ENCODE measurements at regions of chr11 and their contacts with region 1.

Region 1: GRCh38 chr11:119338318-119338907 is 2.3 kb downstream of the C1QTNF5 start:
- DNase-seq: no peak
- ATAC-seq: peak; percentile 57
- H3K4me3 ChIP-seq: peak overlapping the region; percentile 2; the same call in 1 of the 2 replicates
- H3K27ac ChIP-seq: peak overlapping the region; percentile 96
- H3K4me1 ChIP-seq: peaks cover 26% of the 10 kb centered on the region
- H3K27me3 ChIP-seq: no peaks in the 10 kb centered on the region
- CTCF ChIP-seq: peak; percentile 95
- POLR2A ChIP-seq: no peak
- RAD21 ChIP-seq: peak; percentile 82

Region 2: DNA sequence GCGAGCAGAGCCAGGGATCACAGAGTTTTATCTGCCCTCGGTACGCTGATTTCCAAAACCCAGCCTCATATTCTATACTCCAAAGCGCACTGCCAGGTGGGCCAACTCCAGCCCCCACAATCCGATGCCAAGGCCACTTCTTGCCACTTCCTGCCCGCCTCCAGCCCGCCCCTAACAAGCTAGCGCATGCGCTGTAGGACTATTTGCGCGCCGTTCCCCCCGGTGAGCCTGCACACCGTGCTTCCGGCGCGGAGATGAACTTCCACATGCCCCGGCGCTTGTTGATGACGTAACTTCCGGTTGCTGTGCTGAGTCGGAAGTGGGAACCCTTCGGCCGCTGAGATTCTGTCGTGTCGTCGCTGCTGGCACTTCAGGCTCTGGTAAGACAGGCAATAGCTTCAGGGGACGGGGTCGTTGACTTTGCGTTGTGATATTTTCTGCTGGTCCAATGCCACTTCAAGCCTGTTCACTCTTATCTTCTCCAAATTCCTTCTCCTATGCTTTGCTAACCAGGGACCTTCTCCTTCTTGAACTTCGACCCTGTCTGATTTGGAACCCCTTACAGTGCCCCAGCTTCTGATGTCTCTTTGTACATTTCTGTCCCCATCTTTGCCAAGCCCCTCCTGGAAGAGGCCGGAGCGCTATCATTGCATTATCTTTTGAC is 979.0 kb before region 1 on chr11 and contains the start of gene UBE4A:
- CTCF ChIA-PET with region 1: no interaction called
- POLR2A ChIA-PET with region 1: no interaction called
- dilution Hi-C with region 1: no loop called
- in situ Hi-C with region 1: no loop called
- intact Hi-C with region 1: no loop called
- DNase-seq: peak; percentile 93
- ATAC-seq: peak; percentile 88
- H3K4me3 ChIP-seq: peak within 1 kb of the TSS; percentile 78
- H3K27ac ChIP-seq: peak within 1 kb of the TSS; percentile 75
- H3K4me1 ChIP-seq: peaks cover 2% of the 10 kb centered on the region; the same call in 1 of the 2 replicates
- H3K27me3 ChIP-seq: no peaks in the 10 kb centered on the region
- CTCF ChIP-seq: no peak
- POLR2A ChIP-seq: peak; percentile 80
- RAD21 ChIP-seq: no peak
- total RNA-seq, gene UBE4A: 69.7 and 71.1 TPM in 2 replicates

Region 3: DNA sequence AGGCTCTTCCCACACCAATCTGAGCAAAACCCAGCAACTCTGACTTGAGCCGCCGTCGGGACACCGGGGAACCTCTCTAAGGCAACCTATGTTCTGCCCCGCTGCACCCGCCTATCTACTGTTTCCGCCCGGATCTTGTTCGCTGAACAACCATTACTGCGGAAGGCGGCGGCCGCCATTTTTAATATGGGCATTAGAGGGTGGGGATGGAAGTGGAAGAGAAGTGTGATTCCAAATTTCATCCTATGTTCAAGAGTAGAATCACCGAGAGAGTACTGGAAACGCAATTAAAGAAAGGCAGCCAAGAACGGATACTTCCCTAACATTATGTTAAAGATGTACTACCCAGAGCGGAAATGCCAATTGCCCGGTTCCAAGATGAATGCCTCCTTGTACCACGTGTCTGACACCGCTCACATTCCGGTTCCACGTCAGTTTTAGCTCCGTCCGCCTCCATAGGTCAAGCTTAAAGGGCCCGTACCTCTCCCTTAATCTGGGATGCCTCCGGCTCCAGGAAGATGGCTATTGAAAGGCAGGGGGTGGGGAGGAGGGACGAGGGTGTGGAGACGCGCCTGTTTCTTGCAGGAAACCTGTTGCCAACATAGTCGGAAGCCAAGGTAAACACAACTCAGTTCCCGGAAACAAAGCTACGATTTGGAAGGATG is 236.5 kb before region 1 on chr11 and contains the start of gene DPAGT1:
- CTCF ChIA-PET with region 1: interaction called, 9 read pairs
- POLR2A ChIA-PET with region 1: interaction called, 6 read pairs
- dilution Hi-C with region 1: no loop called
- in situ Hi-C with region 1: no loop called
- intact Hi-C with region 1: loop called (anchors 1 kb)
- DNase-seq: peak; percentile 97
- ATAC-seq: peak; percentile 86
- H3K4me3 ChIP-seq: peak within 1 kb of the TSS; percentile 72
- H3K27ac ChIP-seq: peak within 1 kb of the TSS; percentile 80
- H3K4me1 ChIP-seq: peaks cover 8% of the 10 kb centered on the region
- H3K27me3 ChIP-seq: no peaks in the 10 kb centered on the region
- CTCF ChIP-seq: no peak
- POLR2A ChIP-seq: peak; percentile 41; the same call in 1 of the 2 replicates
- RAD21 ChIP-seq: no peak
- total RNA-seq, gene DPAGT1: 13.6 and 15.2 TPM in 2 replicates

Region 4: DNA sequence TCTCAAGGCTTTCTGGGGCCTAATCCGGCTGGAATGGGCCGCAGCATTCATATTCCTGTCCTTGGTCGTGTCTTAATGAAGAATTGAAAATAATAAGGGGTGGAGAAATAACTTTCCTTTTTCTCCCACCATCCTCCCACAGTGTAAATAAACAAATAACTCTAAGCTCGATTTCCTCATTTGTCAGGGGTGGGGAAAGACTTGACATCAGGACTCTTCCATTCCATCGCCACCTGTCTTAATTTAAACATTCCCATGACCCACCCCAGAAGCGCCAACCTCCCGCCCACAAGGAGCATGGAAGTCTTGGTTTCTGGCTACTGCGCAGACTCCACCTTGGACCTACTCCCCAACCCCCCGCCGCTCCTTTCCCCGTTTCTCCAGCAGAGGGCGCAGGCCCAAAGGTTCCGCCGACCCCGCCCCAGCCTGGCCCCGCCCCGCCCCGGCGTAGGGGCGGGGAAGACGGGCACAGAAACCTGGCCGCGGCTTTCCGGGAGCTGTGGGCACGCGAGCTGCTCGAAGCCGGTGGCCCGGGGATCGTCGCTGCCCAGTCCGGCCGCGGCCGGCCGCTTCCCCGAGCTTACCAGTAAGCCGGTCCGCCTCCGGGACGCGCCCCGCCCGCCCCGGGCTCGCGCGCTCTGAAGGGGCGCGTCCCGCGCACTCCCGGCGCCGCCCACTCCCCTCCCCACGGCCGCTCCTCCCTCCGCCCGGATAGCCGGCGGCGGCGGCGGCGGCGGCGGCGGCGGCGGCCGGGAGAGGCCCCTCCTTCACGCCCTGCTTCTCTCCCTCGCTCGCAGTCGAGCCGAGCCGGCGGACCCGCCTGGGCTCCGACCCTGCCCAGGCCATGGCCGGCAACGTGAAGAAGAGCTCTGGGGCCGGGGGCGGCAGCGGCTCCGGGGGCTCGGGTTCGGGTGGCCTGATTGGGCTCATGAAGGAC is 132.6 kb before region 1 on chr11 and contains the start of gene CBL:
- CTCF ChIA-PET with region 1: interaction called, 3 read pairs
- POLR2A ChIA-PET with region 1: interaction called, 4 read pairs
- dilution Hi-C with region 1: no loop called
- in situ Hi-C with region 1: no loop called
- intact Hi-C with region 1: loop called (anchors 1 kb)
- DNase-seq: peak; percentile 84
- ATAC-seq: peak; percentile 93
- H3K4me3 ChIP-seq: peak within 1 kb of the TSS; percentile 100
- H3K27ac ChIP-seq: peak within 1 kb of the TSS; percentile 99
- H3K4me1 ChIP-seq: peaks cover 5% of the 10 kb centered on the region
- H3K27me3 ChIP-seq: no peaks in the 10 kb centered on the region
- CTCF ChIP-seq: peak; percentile 86
- POLR2A ChIP-seq: peak; percentile 59; the same call in 1 of the 2 replicates
- RAD21 ChIP-seq: peak; percentile 51
- total RNA-seq, gene CBL: 6.1 and 7.2 TPM in 2 replicates

Region 5: GRCh38 chr11:119356349-119357031 is 18.1 kb after region 1 on chr11:
- CTCF ChIA-PET with region 1: interaction called, 20 read pairs
- POLR2A ChIA-PET with region 1: interaction called, 6 read pairs
- dilution Hi-C with region 1: no loop called
- in situ Hi-C with region 1: no loop called
- intact Hi-C with region 1: loop called (anchors 1 kb)
- DNase-seq: peak; percentile 66
- ATAC-seq: peak; percentile 87
- H3K4me3 ChIP-seq: peak overlapping the region; percentile 46
- H3K27ac ChIP-seq: no peak overlapping the region
- H3K4me1 ChIP-seq: peaks cover 3% of the 10 kb centered on the region
- H3K27me3 ChIP-seq: 0 out of 2 replicates have a peak, but pooled peaks cover 4% of the 10 kb centered on the region
- CTCF ChIP-seq: peak; percentile 90
- POLR2A ChIP-seq: no peak
- RAD21 ChIP-seq: peak; percentile 79

Region 6: GRCh38 chr11:119373921-119374631 is 35.7 kb after region 1 on chr11:
- CTCF ChIA-PET with region 1: interaction called, 7 read pairs
- POLR2A ChIA-PET with region 1: no interaction called
- dilution Hi-C with region 1: no loop called
- in situ Hi-C with region 1: no loop called
- intact Hi-C with region 1: loop called (anchors 1 kb)
- DNase-seq: peak; percentile 75
- ATAC-seq: peak; percentile 81
- H3K4me3 ChIP-seq: no peak overlapping the region
- H3K27ac ChIP-seq: no peak overlapping the region
- H3K4me1 ChIP-seq: peaks cover 24% of the 10 kb centered on the region
- H3K27me3 ChIP-seq: no peaks in the 10 kb centered on the region
- CTCF ChIP-seq: peak; percentile 97
- POLR2A ChIP-seq: no peak
- RAD21 ChIP-seq: peak; percentile 93

Region 7: DNA sequence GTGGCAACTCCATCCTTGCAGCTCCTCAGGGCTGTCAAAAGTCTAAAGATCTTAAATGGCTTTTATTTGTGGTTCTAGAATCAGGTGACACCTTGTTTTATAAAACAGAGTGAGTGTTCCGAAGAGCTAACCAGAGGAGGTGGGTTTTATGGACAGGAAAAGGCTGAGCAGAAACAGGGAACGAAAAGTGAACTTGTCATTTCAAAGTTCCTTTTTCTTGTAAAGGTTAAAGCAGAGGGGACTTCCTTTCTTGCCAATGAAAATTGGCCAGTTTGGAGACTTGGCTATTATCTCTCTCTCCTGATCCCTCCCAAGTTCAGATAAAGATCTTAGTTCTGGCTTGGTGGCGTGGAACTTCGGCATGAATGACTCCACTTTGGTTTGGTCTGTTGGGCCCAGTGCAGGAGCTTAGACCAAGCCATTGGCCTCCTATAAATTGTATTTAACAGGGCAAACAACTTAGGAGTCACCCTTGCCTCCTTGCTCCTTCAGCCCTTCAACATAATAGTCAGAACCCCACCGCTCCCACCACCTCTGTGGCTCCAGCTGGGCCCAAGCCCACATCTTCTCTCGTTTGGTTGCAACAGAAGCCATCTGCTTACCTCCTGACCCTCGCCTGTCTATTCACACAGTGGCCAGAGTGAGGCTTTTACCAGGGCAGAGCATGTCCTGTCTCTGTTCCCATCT is 186.9 kb after region 1 on chr11:
- CTCF ChIA-PET with region 1: no interaction called
- POLR2A ChIA-PET with region 1: no interaction called
- dilution Hi-C with region 1: no loop called
- in situ Hi-C with region 1: no loop called
- intact Hi-C with region 1: no loop called
- DNase-seq: no peak
- ATAC-seq: no peak
- H3K4me3 ChIP-seq: no peak overlapping the region
- H3K27ac ChIP-seq: no peak overlapping the region
- H3K4me1 ChIP-seq: no peaks in the 10 kb centered on the region
- H3K27me3 ChIP-seq: peaks cover 65% of the 10 kb centered on the region
- CTCF ChIP-seq: no peak
- POLR2A ChIP-seq: no peak
- RAD21 ChIP-seq: no peak

Region 8: GRCh38 chr11:120160436-120160835 is 822.0 kb after region 1 on chr11:
- CTCF ChIA-PET with region 1: no interaction called
- POLR2A ChIA-PET with region 1: no interaction called
- dilution Hi-C with region 1: no loop called
- in situ Hi-C with region 1: no loop called
- intact Hi-C with region 1: no loop called
- DNase-seq: no peak
- ATAC-seq: no peak
- H3K4me3 ChIP-seq: no peak overlapping the region
- H3K27ac ChIP-seq: no peak overlapping the region
- H3K4me1 ChIP-seq: no peaks in the 10 kb centered on the region
- H3K27me3 ChIP-seq: peaks cover 8% of the 10 kb centered on the region
- CTCF ChIP-seq: no peak
- POLR2A ChIP-seq: no peak
- RAD21 ChIP-seq: no peak